Cardiac septum (tissue), 1 donor: ENCODE measurements at regions of chr16 and their contacts with region 1.

Region 1: GRCh38 chr16:81645266-81645694 is 133.8 kb upstream of the PLCG2 start:
- DNase-seq: no peak

Region 2: DNA sequence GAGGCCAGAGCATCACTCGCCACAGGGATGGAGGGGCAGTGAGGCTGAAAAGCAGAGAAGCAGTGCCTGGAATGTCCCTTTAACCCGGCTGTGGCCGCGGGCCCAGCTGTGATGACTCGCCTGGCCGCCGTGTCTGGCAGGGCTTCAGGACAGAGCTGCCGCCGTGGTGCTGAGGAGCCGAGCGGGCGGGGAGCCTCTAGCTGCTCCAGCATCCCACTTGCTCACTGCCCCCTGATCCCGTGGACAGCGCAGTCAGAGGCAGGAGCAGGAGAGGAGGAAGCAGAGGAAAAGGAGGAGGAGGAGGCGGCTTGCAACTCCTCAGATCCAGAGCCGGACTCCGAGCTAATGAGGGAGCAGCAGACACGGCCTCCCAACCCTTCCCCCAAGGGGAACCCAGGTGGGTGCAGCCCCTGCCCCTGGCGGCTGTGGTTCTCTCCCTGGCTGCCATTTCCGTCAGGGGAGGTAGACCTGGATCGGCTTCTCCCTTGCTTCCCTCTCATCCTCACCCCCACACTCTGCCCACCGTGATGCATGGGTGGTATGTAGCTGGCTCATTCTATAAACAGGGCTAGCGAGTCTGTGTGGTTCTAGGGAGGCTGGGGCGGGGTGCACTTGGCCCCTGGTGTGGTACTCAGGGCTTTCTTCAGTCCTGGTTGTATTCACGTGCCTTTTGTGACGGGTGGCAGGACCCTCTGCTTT is 35.0 kb before region 1 on chr16:
- intact Hi-C with region 1: loop called (anchors 5 kb)
- DNase-seq: peak; percentile 85